ENCODE measurements at regions of chr2 and their contacts with region 1.

Region 1: GRCh38 chr2:53877556-53877955 is 17.8 kb upstream of the GPR75 start:
- DNase-seq: no peak
- ATAC-seq: no peak
- H3K4me3 ChIP-seq: no peak overlapping the region
- H3K27ac ChIP-seq: no peak overlapping the region
- H3K4me1 ChIP-seq: no peaks in the 10 kb centered on the region
- H3K27me3 ChIP-seq: no peaks in the 10 kb centered on the region
- CTCF ChIP-seq: no peak
- POLR2A ChIP-seq: no peak
- RAD21 ChIP-seq: no peak

Region 2: GRCh38 chr2:53150146-53150545 is 727.4 kb before region 1 on chr2:
- CTCF ChIA-PET with region 1: no interaction called
- POLR2A ChIA-PET with region 1: no interaction called
- RAD21 ChIA-PET with region 1: no interaction called
- intact Hi-C with region 1: no loop called
- DNase-seq: no peak
- ATAC-seq: no peak
- H3K4me3 ChIP-seq: no peak overlapping the region
- H3K27ac ChIP-seq: no peak overlapping the region
- H3K4me1 ChIP-seq: no peaks in the 10 kb centered on the region
- H3K27me3 ChIP-seq: no peaks in the 10 kb centered on the region
- CTCF ChIP-seq: no peak
- POLR2A ChIP-seq: no peak
- RAD21 ChIP-seq: no peak

Region 3: DNA sequence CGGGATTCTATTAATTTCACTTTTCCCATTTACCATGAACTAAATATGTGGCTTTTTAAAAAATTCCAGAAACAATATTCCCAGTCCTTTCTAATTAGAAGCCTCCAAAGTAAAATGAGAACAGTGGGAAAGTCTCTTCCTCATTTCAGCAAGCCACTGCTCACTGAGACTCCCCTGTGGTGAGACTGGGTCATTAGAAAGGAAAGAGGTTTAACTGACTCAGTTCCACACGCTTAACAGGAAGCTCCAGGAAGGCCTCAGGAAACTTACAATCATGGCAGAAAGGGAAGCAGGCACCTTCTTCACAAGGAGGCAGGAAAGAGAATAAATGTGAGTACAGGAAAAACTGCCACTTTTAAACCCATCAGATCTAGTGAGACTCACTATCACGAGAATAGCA is 368.9 kb before region 1 on chr2:
- CTCF ChIA-PET with region 1: no interaction called
- POLR2A ChIA-PET with region 1: no interaction called
- RAD21 ChIA-PET with region 1: no interaction called
- intact Hi-C with region 1: no loop called
- DNase-seq: no peak
- ATAC-seq: peak; percentile 61; the same call in 1 of the 2 replicates
- H3K4me3 ChIP-seq: no peak overlapping the region
- H3K27ac ChIP-seq: no peak overlapping the region
- H3K4me1 ChIP-seq: peaks cover 0 to 5% of the 10 kb centered on the region in 2 experiments; a peak in 2 of 4 replicates
- H3K27me3 ChIP-seq: no peaks in the 10 kb centered on the region
- CTCF ChIP-seq: peak in 1 of 3 experiments; percentile 24; a peak in 1 of 6 replicates
- POLR2A ChIP-seq: no peak
- RAD21 ChIP-seq: peak; percentile 33

Region 4: DNA sequence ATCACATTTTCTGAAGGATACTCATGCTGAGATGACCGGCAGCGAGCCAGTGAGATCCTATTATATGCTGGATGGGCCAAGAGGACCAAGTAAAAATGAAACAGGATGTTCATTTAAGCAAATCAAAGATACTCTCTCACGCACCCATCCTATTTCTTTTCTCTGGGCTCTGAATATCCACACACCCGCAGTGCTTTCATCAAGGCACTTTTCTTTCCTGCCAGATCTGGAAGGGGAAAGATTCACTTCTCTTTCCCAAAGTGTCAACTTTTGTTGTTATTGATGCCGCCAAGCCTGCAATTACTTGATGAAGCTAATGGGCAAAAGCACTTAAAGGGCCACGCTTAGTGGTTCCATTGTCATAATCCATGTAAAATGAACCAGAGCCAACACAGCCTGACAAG is 301.8 kb before region 1 on chr2:
- CTCF ChIA-PET with region 1: no interaction called
- POLR2A ChIA-PET with region 1: no interaction called
- RAD21 ChIA-PET with region 1: no interaction called
- intact Hi-C with region 1: no loop called
- DNase-seq: no peak
- ATAC-seq: no peak
- H3K4me3 ChIP-seq: no peak overlapping the region
- H3K27ac ChIP-seq: no peak overlapping the region
- H3K4me1 ChIP-seq: no peaks in the 10 kb centered on the region
- H3K27me3 ChIP-seq: no peaks in the 10 kb centered on the region
- CTCF ChIP-seq: no peak
- POLR2A ChIP-seq: no peak
- RAD21 ChIP-seq: no peak

Region 5: GRCh38 chr2:53863538-53864227 is 13.9 kb before region 1 on chr2:
- CTCF ChIA-PET with region 1: no interaction called
- POLR2A ChIA-PET with region 1: no interaction called
- RAD21 ChIA-PET with region 1: no interaction called
- intact Hi-C with region 1: loop called (anchors 1 kb)
- DNase-seq: no peak
- ATAC-seq: no peak
- H3K4me3 ChIP-seq: no peak overlapping the region
- H3K27ac ChIP-seq: no peak overlapping the region
- H3K4me1 ChIP-seq: no peaks in the 10 kb centered on the region
- H3K27me3 ChIP-seq: no peaks in the 10 kb centered on the region
- CTCF ChIP-seq: no peak
- POLR2A ChIP-seq: no peak
- RAD21 ChIP-seq: no peak

Measured in HCT116 (cell line).